ENCODE measurements at regions of chr15 and their contacts with region 1.

Region 1: DNA sequence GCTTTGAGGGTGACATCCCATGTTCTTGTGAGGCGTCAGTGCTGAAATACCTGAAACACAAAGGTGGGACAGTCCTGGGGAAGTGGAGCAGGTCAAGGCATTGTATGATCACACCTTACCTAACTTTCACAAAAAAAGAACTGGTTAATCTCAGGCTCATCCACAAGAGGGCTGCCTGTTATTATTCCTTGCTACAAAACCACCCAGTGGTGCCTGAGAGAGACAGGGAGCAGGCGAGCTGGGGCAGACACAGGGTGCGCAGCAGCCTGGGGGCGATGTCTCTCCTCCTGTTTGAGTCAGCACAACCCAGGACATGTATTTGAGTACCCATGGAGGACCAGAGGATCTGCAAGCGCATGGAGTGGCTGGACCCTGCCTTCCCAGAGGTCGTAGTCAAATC is 316.8 kb upstream of the ATP10A start:
- DNase-seq: no peak
- ATAC-seq: peak in 5 of 8 donors; percentile 6 to 74 (median 61)
- H3K4me3 ChIP-seq: no peak overlapping the region
- H3K27ac ChIP-seq: no peak overlapping the region
- H3K4me1 ChIP-seq: no peaks in the 10 kb centered on the region
- H3K27me3 ChIP-seq: peaks cover 0 to under 1% (median 0%) of the 10 kb centered on the region in 7 donors
- CTCF ChIP-seq: peak in 7 of 9 donors; percentile 13 to 49 (median 33)

Region 2: GRCh38 chr15:26132811-26133210 is 47.1 kb before region 1 on chr15:
- intact Hi-C with region 1: loop called in 1 of 10 experiments (anchors 10 kb)
- DNase-seq: no peak
- ATAC-seq: no peak
- H3K4me3 ChIP-seq: no peak overlapping the region
- H3K27ac ChIP-seq: no peak overlapping the region
- H3K4me1 ChIP-seq: no peaks in the 10 kb centered on the region
- H3K27me3 ChIP-seq: peaks cover 0 to 39% (median 7%) of the 10 kb centered on the region in 7 donors
- CTCF ChIP-seq: no peak

Region 3: DNA sequence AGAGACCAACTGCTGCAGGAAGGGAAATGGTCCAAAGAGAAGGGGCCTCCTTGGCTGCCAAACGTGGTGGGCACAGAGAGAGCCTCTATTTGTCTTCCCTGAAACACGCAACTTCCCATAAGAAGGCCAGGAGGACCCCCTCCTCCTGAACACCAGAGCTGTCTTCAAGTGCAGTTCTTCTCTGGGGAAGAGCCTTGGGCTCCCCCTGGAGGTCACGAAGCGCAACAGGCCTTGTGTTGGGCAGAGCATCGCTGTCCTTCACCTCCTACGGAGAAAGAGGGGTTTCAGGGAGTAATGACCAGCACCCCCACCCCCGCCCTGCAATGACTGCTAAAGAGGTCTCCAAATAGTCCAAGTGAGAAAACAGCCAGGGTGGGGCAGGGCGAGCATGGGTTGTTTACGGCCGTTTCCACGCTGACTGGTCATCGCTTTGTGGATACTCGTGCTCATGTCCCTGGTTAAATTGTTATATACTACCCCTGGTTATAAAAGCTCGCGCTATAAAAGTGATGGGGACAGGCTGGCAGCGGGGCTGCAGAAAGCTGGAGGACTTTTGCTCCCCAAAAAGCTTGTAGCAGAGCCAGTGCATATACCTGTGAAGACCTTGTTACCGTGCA is 80.7 kb after region 1 on chr15:
- intact Hi-C with region 1: loop called in 1 of 10 experiments (anchors 10 kb)
- DNase-seq: peak in 1 of 2 donors; percentile 17
- ATAC-seq: peak in 2 of 8 donors; percentile 19 to 26
- H3K4me3 ChIP-seq: no peak overlapping the region
- H3K27ac ChIP-seq: peak overlapping the region in 5 of 10 donors; percentile 14 to 73 (median 65)
- H3K4me1 ChIP-seq: no peaks in the 10 kb centered on the region
- H3K27me3 ChIP-seq: peaks cover 0 to 2% (median 0%) of the 10 kb centered on the region in 7 donors
- CTCF ChIP-seq: peak; percentile 27 to 72 (median 64)

Region 4: DNA sequence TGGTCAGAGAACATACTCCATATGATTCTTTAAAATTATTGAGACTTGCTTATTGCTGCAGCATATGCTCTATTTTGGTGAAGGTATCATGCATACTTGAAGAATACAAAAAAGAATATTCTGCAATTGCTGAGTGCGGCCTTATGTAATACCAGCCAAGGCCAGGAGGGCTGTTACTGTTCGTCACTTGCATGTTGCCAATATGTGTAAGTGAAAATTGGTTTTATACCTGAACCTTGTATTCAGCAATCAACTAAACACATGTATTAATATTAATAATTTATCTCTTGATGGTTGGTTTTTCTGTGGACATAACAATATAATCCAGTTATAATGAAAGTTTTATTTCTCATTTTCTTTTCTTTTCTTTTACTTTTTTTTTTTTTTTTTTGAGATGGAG is 673.1 kb after region 1 on chr15:
- intact Hi-C with region 1: loop called in 1 of 10 experiments (anchors 10 kb)
- DNase-seq: no peak
- ATAC-seq: no peak
- H3K4me3 ChIP-seq: no peak overlapping the region
- H3K27ac ChIP-seq: no peak overlapping the region
- H3K4me1 ChIP-seq: no peaks in the 10 kb centered on the region
- H3K27me3 ChIP-seq: peaks cover 0 to 14% (median 0%) of the 10 kb centered on the region in 7 donors
- CTCF ChIP-seq: no peak

Region 5: DNA sequence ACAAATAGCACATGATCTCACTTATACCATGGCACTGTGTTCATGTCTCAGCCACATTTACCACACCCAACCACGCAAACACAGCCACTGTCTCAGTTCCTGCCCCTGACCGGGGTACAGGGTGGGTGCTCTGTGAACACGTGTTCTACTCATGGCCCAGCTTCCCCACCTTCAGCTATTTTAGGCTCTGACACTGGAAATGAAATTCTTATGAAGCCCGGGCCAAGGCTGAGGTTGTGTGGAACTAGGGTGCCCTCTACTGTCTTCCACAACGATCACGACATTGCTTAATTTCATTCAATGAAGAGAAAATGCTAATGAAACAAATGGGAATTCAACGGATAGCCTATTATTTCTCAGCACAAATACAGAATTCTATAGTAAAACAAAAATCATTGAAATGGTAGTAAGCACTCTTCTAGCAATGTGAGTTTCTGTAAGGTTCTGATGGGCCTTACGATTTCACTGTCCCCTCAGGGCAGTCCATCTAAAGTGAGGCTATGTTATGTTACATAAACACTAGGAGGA is 684.8 kb after region 1 on chr15:
- intact Hi-C with region 1: loop called in 8 of 10 experiments (anchors 2 to 10 kb)
- DNase-seq: peak in 1 of 2 donors; percentile 11
- ATAC-seq: peak; percentile 58 to 80 (median 70)
- H3K4me3 ChIP-seq: no peak overlapping the region
- H3K27ac ChIP-seq: no peak overlapping the region
- H3K4me1 ChIP-seq: peaks cover 0 to 7% (median 0%) of the 10 kb centered on the region in 9 donors
- H3K27me3 ChIP-seq: peaks cover 17 to 52% (median 45%) of the 10 kb centered on the region in 7 donors
- CTCF ChIP-seq: peak; percentile 14 to 66 (median 55)

Measured in heart right ventricle (tissue), 16 donors.